ENCODE measurements at regions of chr5 and their contacts with region 1.

Region 1: DNA sequence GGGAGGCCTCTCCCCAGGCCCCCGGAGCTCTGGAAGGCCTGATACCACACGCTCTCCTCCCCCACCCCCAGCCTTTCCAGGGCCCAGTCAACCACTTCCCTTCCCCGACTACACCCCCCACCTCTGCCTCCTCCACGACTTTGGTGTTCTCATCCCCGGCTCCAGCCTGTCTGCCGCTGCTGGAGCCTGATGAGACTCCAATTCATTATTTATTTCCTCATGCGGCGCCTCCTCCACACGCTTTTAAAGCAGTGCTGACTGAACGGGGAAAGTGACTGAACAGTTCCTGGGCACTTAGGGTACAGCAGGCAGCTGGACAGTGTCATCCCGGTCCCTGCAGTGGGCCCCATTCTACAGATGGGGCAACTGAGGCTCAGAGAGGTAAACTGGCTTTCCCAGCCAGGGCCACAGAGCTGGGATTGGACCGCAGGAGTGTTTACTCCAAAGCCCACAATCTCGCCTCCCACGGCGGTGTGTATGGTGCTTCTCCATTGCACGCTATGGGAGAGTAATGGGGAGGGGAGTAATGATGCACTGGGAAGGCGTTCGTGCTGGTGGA is 15.9 kb upstream of the RPL26L1 start:
- DNase-seq: no peak
- ATAC-seq: no peak
- H3K4me3 Mint-ChIP-seq: no peak overlapping the region
- H3K27ac Mint-ChIP-seq: no peak overlapping the region
- H3K4me1 Mint-ChIP-seq: no peaks in the 10 kb centered on the region
- H3K27me3 Mint-ChIP-seq: no peaks in the 10 kb centered on the region
- CTCF ChIP-seq: no peak

Region 2: DNA sequence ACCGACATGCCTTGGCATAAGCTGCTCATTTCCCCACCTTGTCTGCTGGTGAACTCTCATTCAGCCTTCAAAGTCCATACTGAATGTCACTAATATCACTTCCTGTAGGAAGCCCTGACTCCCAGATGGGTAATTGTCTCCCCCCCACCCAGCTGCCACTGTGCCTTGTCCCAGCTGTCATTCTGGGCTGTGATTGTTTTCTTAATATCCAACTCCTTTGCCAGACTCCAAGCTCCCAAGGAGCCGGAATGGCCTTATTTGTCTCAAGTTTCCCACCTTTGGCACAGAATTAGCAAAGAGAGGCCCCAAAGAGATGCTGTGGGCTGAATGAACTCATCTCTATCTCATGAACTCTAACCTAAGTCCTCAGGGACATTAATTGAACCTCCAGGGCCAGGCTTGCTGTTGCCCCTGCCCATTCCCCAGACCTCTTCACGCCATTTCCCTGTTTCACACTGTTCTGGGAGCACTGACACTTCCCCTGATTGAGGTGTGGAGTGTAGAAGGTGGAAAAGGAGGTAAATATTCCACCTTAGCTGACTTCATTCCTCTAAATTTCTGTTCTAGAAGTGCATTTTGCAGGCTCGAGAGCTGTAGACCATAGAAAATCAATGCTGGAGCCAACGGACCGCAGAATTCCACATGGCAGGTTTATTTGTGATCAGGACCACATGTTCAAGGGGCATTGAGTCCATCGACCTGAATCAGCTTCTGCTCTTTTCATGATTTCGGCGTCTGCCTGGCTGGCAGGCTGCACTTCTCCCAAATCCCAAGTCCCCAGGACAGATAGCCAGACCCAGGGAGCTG is 484.2 kb before region 1 on chr5:
- CTCF ChIA-PET with region 1: no interaction called
- POLR2A ChIA-PET with region 1: no interaction called
- intact Hi-C with region 1: loop called (anchors 10 kb)
- DNase-seq: no peak
- ATAC-seq: no peak
- H3K4me3 Mint-ChIP-seq: no peak overlapping the region
- H3K27ac Mint-ChIP-seq: no peak overlapping the region
- H3K4me1 Mint-ChIP-seq: peaks cover 17% of the 10 kb centered on the region
- H3K27me3 Mint-ChIP-seq: peaks cover 8% of the 10 kb centered on the region
- CTCF ChIP-seq: no peak

Region 3: DNA sequence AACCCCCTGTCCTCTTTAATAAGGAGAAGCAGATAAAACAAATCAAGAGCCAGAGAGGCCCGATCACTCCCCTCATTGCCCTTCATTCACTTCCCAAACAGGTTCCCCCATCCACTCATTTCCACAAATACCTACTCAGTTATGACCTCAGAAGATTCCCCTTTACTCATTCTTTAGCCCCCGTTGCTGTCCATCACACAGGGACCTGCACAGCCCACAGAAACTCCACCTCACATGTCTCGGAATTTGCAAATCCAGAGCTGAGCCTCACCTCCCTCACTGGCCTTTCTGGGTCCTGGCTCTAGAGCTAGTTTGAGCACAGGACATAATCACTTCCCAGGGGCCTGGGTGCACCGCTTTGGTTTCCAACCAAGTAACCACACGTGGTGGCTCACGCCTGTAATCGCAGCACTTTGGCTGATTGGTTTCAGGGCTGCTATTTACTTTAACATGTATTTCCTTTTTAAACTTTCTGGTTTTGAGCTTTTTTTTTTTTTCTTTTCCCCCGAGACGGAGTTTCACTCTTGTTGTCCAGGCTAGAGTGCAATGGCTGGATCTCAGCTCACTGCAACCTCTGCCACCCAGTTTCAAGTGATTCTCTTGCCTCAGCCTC is 58.0 kb after region 1 on chr5:
- CTCF ChIA-PET with region 1: no interaction called
- POLR2A ChIA-PET with region 1: no interaction called
- intact Hi-C with region 1: no loop called
- DNase-seq: peak; percentile 59
- ATAC-seq: peak; percentile 77
- H3K4me3 Mint-ChIP-seq: peak overlapping the region; percentile 39
- H3K27ac Mint-ChIP-seq: peak overlapping the region; percentile 82
- H3K4me1 Mint-ChIP-seq: peaks cover 70% of the 10 kb centered on the region
- H3K27me3 Mint-ChIP-seq: no peaks in the 10 kb centered on the region
- CTCF ChIP-seq: no peak

Region 4: DNA sequence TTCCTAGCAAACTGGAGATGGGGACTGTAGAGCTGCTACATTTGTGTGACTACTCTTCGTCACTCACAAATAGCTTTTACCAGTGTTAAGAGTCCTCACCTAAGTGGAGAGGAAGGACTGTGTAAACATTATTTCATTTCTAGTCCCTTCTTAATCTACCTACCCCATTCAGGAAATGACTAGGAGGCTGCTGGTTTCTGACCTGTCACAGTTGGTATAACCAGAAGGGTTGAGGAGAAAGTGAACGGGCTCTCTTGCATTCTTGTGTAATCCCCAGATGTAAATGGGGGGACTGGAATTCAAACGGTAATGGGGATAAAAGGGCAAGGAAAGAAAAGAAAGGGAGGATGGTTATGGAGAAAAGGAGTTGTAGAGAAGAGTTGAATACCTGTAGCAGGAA is 165.6 kb after region 1 on chr5:
- CTCF ChIA-PET with region 1: no interaction called
- POLR2A ChIA-PET with region 1: no interaction called
- intact Hi-C with region 1: no loop called
- DNase-seq: no peak
- ATAC-seq: no peak
- H3K4me3 Mint-ChIP-seq: no peak overlapping the region
- H3K27ac Mint-ChIP-seq: peak overlapping the region; percentile 72
- H3K4me1 Mint-ChIP-seq: peaks cover 23% of the 10 kb centered on the region
- H3K27me3 Mint-ChIP-seq: no peaks in the 10 kb centered on the region
- CTCF ChIP-seq: no peak